GM12878 (cell line): ENCODE measurements at regions of chr3 and their contacts with region 1.

Region 1: DNA sequence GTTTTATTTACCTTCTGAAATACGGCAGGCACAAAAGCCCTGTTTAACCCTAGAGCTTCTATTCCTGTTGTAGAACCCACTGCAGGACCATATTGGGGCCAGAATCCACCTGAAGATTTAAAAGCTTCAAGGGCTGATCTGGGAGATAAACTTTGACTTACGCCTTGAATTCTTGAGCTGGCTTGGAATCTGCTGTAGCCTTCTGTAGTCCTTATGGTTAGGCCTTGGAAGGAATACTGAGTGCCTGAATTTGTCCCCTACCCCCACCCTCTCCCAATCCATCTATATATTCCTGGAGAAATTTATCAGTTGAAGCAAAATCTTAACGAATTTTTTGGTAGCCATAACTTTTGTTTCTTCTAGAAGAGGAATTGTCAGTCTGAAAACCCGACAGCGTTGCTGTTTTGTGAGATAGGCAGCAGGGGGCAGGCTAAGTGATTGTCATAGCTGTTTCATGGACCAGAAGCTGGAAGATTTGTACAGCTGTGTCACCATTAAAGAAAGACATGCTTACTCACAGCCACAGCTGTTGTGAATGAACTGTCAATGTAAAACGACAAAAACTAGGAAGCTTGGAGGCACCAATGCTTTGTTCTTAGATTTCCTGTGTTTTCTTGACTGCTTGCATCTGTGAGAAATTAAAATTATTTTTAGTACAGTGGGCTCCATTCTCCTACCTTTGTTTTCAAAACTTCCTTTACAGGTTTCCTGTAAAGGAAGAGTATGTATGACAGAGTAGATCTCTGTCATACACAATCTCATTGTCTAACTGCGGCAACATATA is 12.8 kb downstream of the LXN start:
- DNase-seq: no peak
- ATAC-seq: peak; percentile 88
- H3K4me3 ChIP-seq: no peak overlapping the region
- H3K27ac ChIP-seq: no peak overlapping the region
- H3K4me1 ChIP-seq: no peaks in the 10 kb centered on the region
- H3K27me3 ChIP-seq: no peaks in the 10 kb centered on the region
- CTCF ChIP-seq: peak; percentile 56 to 69 (median 68)
- EP300 ChIP-seq: no peak
- POLR2A ChIP-seq: no peak
- RAD21 ChIP-seq: peak; percentile 43; the same call in 1 of the 2 replicates

Region 2: GRCh38 chr3:158407844-158408517 is 251.7 kb before region 1 on chr3:
- CTCF ChIA-PET with region 1: no interaction called
- POLR2A ChIA-PET with region 1: no interaction called
- RAD21 ChIA-PET with region 1: no interaction called
- SMC1A ChIA-PET with region 1: no interaction called
- in situ Hi-C with region 1: no loop called
- intact Hi-C with region 1: no loop called
- DNase-seq: no peak
- ATAC-seq: no peak
- H3K4me3 ChIP-seq: no peak overlapping the region
- H3K27ac ChIP-seq: no peak overlapping the region
- H3K4me1 ChIP-seq: no peaks in the 10 kb centered on the region
- H3K27me3 ChIP-seq: no peaks in the 10 kb centered on the region
- CTCF ChIP-seq: no peak
- EP300 ChIP-seq: no peak
- POLR2A ChIP-seq: no peak
- RAD21 ChIP-seq: no peak

Region 3: DNA sequence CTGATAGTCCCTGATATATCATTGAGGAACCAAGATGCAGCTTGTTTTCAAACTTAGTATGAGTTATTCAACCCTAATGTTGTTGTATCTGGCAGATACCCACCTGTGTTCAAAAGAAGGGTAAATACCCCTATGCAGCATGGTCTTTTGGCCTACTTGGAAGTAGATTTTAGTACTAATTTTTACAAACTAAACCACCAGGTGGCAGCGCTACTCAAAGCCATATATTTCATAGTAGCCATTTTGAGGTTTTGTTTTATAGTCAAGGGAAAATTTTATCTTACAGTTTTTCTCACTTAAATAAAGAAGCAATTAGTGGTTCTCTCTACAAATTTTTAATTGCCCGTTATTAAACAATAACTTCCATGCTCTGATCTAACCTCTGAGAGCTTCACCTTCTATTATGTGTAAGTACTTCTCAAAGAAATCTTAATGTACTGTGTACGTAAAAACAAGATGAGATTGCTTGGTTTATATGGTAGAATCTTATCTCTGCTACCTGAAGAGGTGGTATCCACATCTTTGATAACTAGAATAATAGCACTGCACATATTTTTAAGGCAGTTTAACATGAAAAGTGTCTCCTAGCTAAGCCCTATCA is 120.1 kb before region 1 on chr3:
- CTCF ChIA-PET with region 1: interaction called, 15 read pairs
- POLR2A ChIA-PET with region 1: no interaction called
- RAD21 ChIA-PET with region 1: interaction called, 3 read pairs
- SMC1A ChIA-PET with region 1: no interaction called
- in situ Hi-C with region 1: no loop called
- intact Hi-C with region 1: no loop called
- DNase-seq: no peak
- ATAC-seq: peak; percentile 87
- H3K4me3 ChIP-seq: no peak overlapping the region
- H3K27ac ChIP-seq: no peak overlapping the region
- H3K4me1 ChIP-seq: no peaks in the 10 kb centered on the region
- H3K27me3 ChIP-seq: no peaks in the 10 kb centered on the region
- CTCF ChIP-seq: peak; percentile 39 to 47 (median 46); a peak in 4 of 6 replicates
- EP300 ChIP-seq: no peak
- POLR2A ChIP-seq: no peak
- RAD21 ChIP-seq: peak; percentile 42; the same call in 1 of the 2 replicates

Region 4: GRCh38 chr3:158672293-158673176 is 12.9 kb after region 1 on chr3 and contains the start of gene LXN:
- CTCF ChIA-PET with region 1: interaction called, 60 read pairs
- POLR2A ChIA-PET with region 1: interaction called, 3 read pairs
- RAD21 ChIA-PET with region 1: no interaction called
- SMC1A ChIA-PET with region 1: interaction called, 5 read pairs
- in situ Hi-C with region 1: no loop called
- intact Hi-C with region 1: no loop called
- DNase-seq: peak; percentile 56
- ATAC-seq: peak; percentile 99
- H3K4me3 ChIP-seq: peak within 1 kb of the TSS; percentile 78
- H3K27ac ChIP-seq: peak within 1 kb of the TSS; percentile 75
- H3K4me1 ChIP-seq: peaks cover 4% of the 10 kb centered on the region; the same call in 1 of the 2 replicates
- H3K27me3 ChIP-seq: no peaks in the 10 kb centered on the region
- CTCF ChIP-seq: peak; percentile 56 to 83 (median 82)
- EP300 ChIP-seq: no peak
- POLR2A ChIP-seq: peak; percentile 88
- RAD21 ChIP-seq: peak; percentile 38; the same call in 1 of the 2 replicates
- polyA plus RNA-seq, gene LXN: 30.7 to 45.0 TPM

Region 5: GRCh38 chr3:158727206-158728060 is 67.8 kb after region 1 on chr3:
- CTCF ChIA-PET with region 1: interaction called, 18 read pairs
- POLR2A ChIA-PET with region 1: no interaction called
- RAD21 ChIA-PET with region 1: interaction called, 3 read pairs
- SMC1A ChIA-PET with region 1: interaction called, 11 read pairs
- in situ Hi-C with region 1: no loop called
- intact Hi-C with region 1: no loop called
- DNase-seq: peak; percentile 26
- ATAC-seq: peak; percentile 75
- H3K4me3 ChIP-seq: no peak overlapping the region
- H3K27ac ChIP-seq: no peak overlapping the region
- H3K4me1 ChIP-seq: peaks cover 5% of the 10 kb centered on the region
- H3K27me3 ChIP-seq: no peaks in the 10 kb centered on the region
- CTCF ChIP-seq: peak; percentile 67 to 90 (median 81)
- EP300 ChIP-seq: no peak
- POLR2A ChIP-seq: no peak
- RAD21 ChIP-seq: peak; percentile 74

Region 6: GRCh38 chr3:158801696-158802408 is 142.2 kb after region 1 on chr3 and contains the start of gene MFSD1:
- CTCF ChIA-PET with region 1: interaction called, 18 read pairs
- POLR2A ChIA-PET with region 1: no interaction called
- RAD21 ChIA-PET with region 1: no interaction called
- SMC1A ChIA-PET with region 1: interaction called, 4 read pairs
- in situ Hi-C with region 1: no loop called
- intact Hi-C with region 1: no loop called
- DNase-seq: peak; percentile 43
- ATAC-seq: peak; percentile 98
- H3K4me3 ChIP-seq: peak within 1 kb of the TSS; percentile 93
- H3K27ac ChIP-seq: peak within 1 kb of the TSS; percentile 61
- H3K4me1 ChIP-seq: peaks cover 3% of the 10 kb centered on the region
- H3K27me3 ChIP-seq: no peaks in the 10 kb centered on the region
- CTCF ChIP-seq: no peak
- EP300 ChIP-seq: no peak
- POLR2A ChIP-seq: peak; percentile 87
- RAD21 ChIP-seq: no peak
- polyA plus RNA-seq, gene MFSD1: 7.3 to 14.6 TPM